Caco-2 (cell line): ENCODE measurements at regions of chr19 and their contacts with region 1.

Region 1: DNA sequence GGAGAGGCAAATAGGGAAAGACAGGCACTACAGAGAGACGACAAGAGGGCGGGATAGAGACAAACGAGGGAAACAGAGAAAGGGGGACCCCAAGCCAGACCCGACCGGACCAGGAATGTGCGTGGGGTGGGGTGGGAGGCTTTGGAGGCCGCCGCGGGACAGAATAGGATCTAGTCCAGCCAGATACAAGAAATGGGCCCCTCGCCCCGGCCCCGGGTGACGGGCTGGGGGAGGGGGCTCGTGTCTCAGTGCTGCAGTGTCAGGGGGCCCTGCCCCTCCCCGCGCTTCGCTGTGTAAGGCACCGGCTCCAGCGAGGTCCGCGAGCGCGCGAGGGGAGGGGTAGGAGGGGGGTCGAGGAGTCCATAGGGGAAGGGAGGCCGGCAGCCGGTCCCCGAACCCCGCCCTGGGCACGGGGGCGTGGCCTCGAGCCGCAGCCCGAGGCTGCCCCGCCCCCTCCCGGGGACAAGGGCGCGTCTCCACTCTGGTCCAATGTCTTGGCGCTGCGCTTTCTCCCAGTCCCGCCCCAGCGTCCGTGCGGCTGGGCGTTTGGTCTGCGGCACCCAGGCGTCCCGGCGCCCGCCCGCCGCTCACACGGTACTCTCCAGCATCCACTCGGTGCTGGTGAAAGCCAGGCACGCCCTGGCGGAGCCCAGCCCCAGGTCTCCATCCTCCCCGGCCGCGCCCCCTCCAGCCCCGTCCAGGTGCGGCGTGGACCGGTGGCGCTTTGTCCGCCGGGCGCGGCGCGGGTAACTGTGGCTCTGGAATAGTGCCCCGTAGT is 11.0 kb downstream of the IFNL1 start:
- DNase-seq: peak; percentile 89 to 91
- H3K4me3 ChIP-seq: peak overlapping the region; percentile 65
- H3K4me3 Mint-ChIP-seq: peak overlapping the region; percentile 86
- H3K27ac Mint-ChIP-seq: peak overlapping the region; percentile 91
- H3K4me1 ChIP-seq: peaks cover 59% of the 10 kb centered on the region
- H3K4me1 Mint-ChIP-seq: peaks cover 60% of the 10 kb centered on the region
- H3K27me3 ChIP-seq: no peaks in the 10 kb centered on the region
- H3K27me3 Mint-ChIP-seq: no peaks in the 10 kb centered on the region
- CTCF ChIP-seq: no peak

Region 2: DNA sequence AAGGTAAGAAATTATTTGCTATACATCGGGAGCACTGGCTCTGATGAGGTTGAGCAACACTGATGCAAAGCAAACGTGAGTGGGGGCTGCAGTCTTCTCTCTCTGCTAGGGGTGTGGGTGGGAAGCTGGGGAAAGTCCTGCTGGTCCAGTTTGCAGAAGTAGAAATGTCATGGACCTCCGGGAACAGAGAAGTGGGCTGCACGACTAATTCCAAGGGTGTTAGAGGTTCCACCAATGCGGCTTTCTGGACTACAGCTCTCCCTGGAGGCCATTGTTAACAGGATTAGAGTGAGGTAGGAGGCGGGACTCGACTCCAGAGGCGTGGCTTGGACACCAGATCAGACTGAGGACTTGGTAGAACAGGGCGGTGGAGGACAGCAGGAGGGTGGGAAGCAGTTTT is 269.1 kb before region 1 on chr19:
- CTCF ChIA-PET with region 1: no interaction called
- POLR2A ChIA-PET with region 1: no interaction called
- intact Hi-C with region 1: no loop called
- DNase-seq: peak; percentile 66 to 71
- H3K4me3 ChIP-seq: no peak overlapping the region
- H3K4me3 Mint-ChIP-seq: no peak overlapping the region
- H3K27ac Mint-ChIP-seq: no peak overlapping the region
- H3K4me1 ChIP-seq: peaks cover 10% of the 10 kb centered on the region
- H3K4me1 Mint-ChIP-seq: peaks cover 13% of the 10 kb centered on the region
- H3K27me3 ChIP-seq: no peaks in the 10 kb centered on the region
- H3K27me3 Mint-ChIP-seq: no peaks in the 10 kb centered on the region
- CTCF ChIP-seq: peak in 1 of 2 experiments; percentile 45

Region 3: DNA sequence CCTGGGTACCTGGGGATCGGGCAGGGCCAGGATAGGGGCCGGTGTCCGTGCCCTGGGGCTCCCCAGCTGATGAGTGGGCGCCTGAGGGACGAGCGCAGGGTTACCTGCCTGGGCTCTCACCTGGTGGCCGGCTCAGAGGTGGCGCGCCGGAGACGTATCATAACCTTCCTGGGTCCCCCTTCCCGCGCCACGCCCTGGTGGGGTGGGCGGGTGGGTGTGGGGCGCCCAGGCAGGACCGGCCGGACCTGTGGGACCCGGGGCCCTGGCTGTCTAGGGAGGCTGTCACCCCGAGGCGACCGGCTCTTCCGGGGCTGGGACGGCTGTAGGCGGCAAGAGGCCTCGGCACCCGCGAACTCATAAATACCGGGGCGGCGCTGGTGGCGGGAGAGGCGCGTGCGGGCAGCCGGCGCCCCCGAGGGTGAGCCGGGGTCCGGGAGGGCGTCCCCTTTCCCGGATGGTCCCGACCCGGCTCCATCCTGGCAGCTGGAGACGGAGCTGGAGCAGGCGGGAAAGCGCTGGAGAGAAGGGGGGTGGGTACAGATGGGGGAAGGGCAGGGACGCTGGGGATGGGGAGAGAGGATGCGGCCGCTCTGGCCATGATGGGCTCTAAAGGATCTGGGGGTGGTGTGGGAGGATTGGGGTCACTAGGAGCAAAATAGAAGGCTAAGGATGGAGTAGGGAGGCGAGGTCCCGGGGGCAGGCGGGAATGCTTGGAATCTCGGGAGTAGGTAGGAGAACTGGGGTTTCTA is 223.1 kb before region 1 on chr19 and contains the start of gene ACP7:
- CTCF ChIA-PET with region 1: no interaction called
- POLR2A ChIA-PET with region 1: no interaction called
- intact Hi-C with region 1: no loop called
- DNase-seq: peak; percentile 53 to 61
- H3K4me3 ChIP-seq: peak within 1 kb of the TSS; percentile 51
- H3K4me3 Mint-ChIP-seq: peak within 1 kb of the TSS; percentile 84
- H3K27ac Mint-ChIP-seq: no peak within 1 kb of the TSS
- H3K4me1 ChIP-seq: 0 out of 2 replicates have a peak, but pooled peaks cover 5% of the 10 kb centered on the region
- H3K4me1 Mint-ChIP-seq: peaks cover 7% of the 10 kb centered on the region
- H3K27me3 ChIP-seq: no peaks in the 10 kb centered on the region; the same call in none of the 2 replicates
- H3K27me3 Mint-ChIP-seq: peaks cover 12% of the 10 kb centered on the region
- CTCF ChIP-seq: no peak
- total RNA-seq, gene ACP7: 0.45 and 0.46 TPM in 2 replicates

Region 4: GRCh38 chr19:39254531-39255345 is 52.5 kb before region 1 on chr19:
- CTCF ChIA-PET with region 1: interaction called, 9 read pairs
- POLR2A ChIA-PET with region 1: no interaction called
- intact Hi-C with region 1: loop called (anchors 1 kb)
- DNase-seq: peak; percentile 78 to 90
- H3K4me3 ChIP-seq: no peak overlapping the region
- H3K4me3 Mint-ChIP-seq: no peak overlapping the region
- H3K27ac Mint-ChIP-seq: peak overlapping the region; percentile 58
- H3K4me1 ChIP-seq: peaks cover 66% of the 10 kb centered on the region
- H3K4me1 Mint-ChIP-seq: peaks cover 52% of the 10 kb centered on the region
- H3K27me3 ChIP-seq: no peaks in the 10 kb centered on the region
- H3K27me3 Mint-ChIP-seq: no peaks in the 10 kb centered on the region
- CTCF ChIP-seq: no peak

Region 5: GRCh38 chr19:39319892-39320248 is 12.6 kb after region 1 on chr19:
- CTCF ChIA-PET with region 1: no interaction called
- POLR2A ChIA-PET with region 1: no interaction called
- intact Hi-C with region 1: loop called (anchors 1 kb)
- DNase-seq: no peak
- H3K4me3 ChIP-seq: peak overlapping the region; percentile 95
- H3K4me3 Mint-ChIP-seq: peak overlapping the region; percentile 93
- H3K27ac Mint-ChIP-seq: no peak overlapping the region
- H3K4me1 ChIP-seq: peaks cover 14% of the 10 kb centered on the region
- H3K4me1 Mint-ChIP-seq: peaks cover 33% of the 10 kb centered on the region
- H3K27me3 ChIP-seq: no peaks in the 10 kb centered on the region
- H3K27me3 Mint-ChIP-seq: no peaks in the 10 kb centered on the region
- CTCF ChIP-seq: no peak